SK-N-SH (cell line): ENCODE measurements at regions of chr9 and their contacts with region 1.

Region 1: GRCh38 chr9:110623462-110624025 is 44.0 kb upstream of the SVEP1 start:
- DNase-seq: peak; percentile 30
- H3K4me3 ChIP-seq: no peak overlapping the region; a peak in 1 of 4 replicates
- H3K27ac ChIP-seq: no peak overlapping the region
- H3K4me1 ChIP-seq: peaks cover 0 to 7% of the 10 kb centered on the region in 2 experiments; a peak in 1 of 4 replicates
- H3K27me3 ChIP-seq: no peaks in the 10 kb centered on the region
- CTCF ChIP-seq: peak; percentile 76
- EP300 ChIP-seq: no peak
- RAD21 ChIP-seq: peak; percentile 92

Region 2: DNA sequence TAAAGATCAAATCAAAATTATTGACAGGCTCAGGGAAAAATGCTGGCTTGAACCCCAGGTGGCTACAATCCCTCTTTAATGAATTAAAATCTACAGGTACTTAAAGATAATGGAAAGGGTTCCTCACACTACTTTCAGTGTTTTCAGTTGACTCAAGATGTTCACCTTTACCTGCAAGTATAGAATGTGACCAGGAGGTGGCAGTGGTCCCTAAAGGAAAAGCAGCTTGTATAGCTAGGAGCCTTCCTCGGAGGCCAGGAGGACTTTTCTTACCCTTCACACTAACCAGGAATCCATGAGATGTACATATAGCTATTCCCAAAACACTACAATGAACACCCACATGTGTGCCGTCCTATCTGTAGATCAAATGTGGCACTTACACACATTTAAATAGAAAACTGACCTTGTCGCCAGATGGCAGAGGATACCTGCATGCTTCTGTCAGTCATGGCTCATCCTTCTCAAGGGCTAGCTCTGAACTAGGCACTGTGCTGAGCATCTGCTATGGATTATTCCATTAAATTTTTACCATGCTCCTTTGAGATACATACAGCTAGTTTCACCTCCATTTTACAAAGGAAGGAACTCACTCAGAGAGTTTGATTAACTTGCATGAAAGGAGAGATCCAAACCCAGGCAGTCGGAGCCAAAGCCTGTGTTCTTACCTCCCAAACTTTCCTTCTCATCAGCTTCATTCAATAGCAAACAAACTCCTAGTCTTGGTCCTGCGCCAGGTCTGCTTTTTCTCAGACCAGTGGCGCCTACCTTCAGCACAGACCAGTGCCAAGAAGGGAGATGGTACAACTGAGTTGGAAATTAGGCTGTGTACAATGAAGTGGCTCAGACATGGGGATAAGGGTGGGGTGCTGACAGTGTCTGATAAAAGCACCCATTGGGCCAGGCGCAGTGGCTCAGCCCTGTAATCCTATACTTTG is 440.1 kb before region 1 on chr9:
- CTCF ChIA-PET with region 1: interaction called, 42 read pairs
- POLR2A ChIA-PET with region 1: no interaction called
- DNase-seq: peak; percentile 67
- H3K4me3 ChIP-seq: peak overlapping the region in 1 of 2 experiments; percentile 4; a peak in 1 of 4 replicates
- H3K27ac ChIP-seq: no peak overlapping the region
- H3K4me1 ChIP-seq: no peaks in the 10 kb centered on the region
- H3K27me3 ChIP-seq: no peaks in the 10 kb centered on the region
- CTCF ChIP-seq: peak; percentile 81
- EP300 ChIP-seq: no peak
- RAD21 ChIP-seq: peak; percentile 88

Region 3: DNA sequence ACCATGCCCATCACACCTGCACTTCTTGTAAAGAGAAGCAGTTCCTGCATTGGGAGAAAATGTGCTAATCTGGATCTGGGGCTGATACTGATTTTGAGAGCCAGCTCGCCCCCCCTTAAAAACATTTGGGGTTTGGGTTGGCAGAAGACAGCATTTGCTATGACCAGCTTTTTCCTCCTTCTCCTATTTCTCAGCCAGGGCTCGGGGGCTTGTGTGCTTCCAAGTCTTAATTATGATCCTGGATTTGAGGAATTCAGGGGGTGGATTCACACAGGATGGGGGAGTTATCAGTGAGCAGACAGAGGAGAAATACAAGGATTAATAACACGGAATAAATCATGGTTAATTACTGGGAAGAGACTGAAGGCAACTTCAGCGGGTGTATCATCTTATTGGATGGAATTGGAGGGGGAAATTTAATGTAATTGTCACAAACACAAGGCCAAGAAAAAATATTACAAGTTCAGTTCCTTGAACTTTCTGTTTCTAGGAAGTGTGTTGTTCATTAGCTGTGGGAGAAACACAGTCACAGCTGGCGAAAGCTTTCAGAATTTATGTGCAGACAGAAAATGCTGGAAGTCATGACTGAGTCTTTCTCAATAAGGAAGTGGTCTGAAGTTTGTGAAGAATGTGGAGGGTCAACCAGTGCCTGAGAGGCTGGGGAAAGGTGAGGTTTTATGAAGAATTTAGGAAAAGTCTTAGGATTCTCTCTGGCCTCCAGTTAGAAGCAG is 430.8 kb before region 1 on chr9:
- CTCF ChIA-PET with region 1: interaction called, 10 read pairs
- POLR2A ChIA-PET with region 1: no interaction called
- DNase-seq: no peak
- H3K4me3 ChIP-seq: no peak overlapping the region
- H3K27ac ChIP-seq: no peak overlapping the region
- H3K4me1 ChIP-seq: no peaks in the 10 kb centered on the region
- H3K27me3 ChIP-seq: no peaks in the 10 kb centered on the region
- CTCF ChIP-seq: no peak
- EP300 ChIP-seq: no peak
- RAD21 ChIP-seq: no peak

Region 4: GRCh38 chr9:110427497-110428104 is 195.9 kb before region 1 on chr9:
- CTCF ChIA-PET with region 1: interaction called, 16 read pairs
- POLR2A ChIA-PET with region 1: no interaction called
- DNase-seq: peak; percentile 45
- H3K4me3 ChIP-seq: no peak overlapping the region; a peak in 1 of 4 replicates
- H3K27ac ChIP-seq: no peak overlapping the region
- H3K4me1 ChIP-seq: no peaks in the 10 kb centered on the region
- H3K27me3 ChIP-seq: no peaks in the 10 kb centered on the region; the same call in 1 of the 2 replicates
- CTCF ChIP-seq: peak; percentile 55
- EP300 ChIP-seq: no peak
- RAD21 ChIP-seq: peak; percentile 70